ENCODE measurements at regions of chr16 and their contacts with region 1.

Region 1: GRCh38 chr16:54286090-54286993 is at the start of gene IRX3:
- DNase-seq: peak; percentile 93
- ATAC-seq: peak; percentile 82
- total RNA-seq, gene IRX3: 5.6 TPM

Region 2: DNA sequence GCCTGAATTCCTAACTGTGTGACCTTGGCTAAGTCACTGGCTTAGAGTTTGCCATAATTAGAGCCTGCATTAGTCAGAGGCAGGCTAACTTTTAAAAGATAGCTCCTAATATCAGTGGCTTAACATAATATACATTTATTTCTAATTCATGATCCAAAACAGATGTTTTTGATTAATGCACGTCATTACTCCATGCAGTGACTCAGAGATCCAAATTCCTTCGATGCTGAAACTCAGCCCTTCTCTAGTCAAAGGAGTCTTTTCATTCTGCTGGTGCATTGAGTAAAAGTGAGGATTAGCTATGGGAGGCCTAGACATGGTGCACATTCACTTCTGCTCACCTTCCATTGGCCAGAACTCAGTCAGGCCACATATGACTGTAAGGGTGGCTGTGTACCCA is 49.6 kb before region 1 on chr16:
- intact Hi-C with region 1: no loop called
- DNase-seq: no peak
- ATAC-seq: no peak

Region 3: GRCh38 chr16:54817446-54817845 is 531.1 kb after region 1 on chr16:
- intact Hi-C with region 1: loop called (anchors 10 kb)
- DNase-seq: no peak
- ATAC-seq: peak; percentile 62

Region 4: GRCh38 chr16:54929090-54930004 is 643.0 kb after region 1 on chr16:
- intact Hi-C with region 1: loop called (anchors 10 kb)
- DNase-seq: peak; percentile 100
- ATAC-seq: peak; percentile 88

Measured in left ventricle myocardium superior (tissue), 1 donor.